A673 (cell line): ENCODE measurements at regions of chr6 and their contacts with region 1.

Region 1: GRCh38 chr6:85678602-85679444 is 36.1 kb upstream of the SYNCRIP start:
- DNase-seq: peak; percentile 99
- H3K4me3 ChIP-seq: peak overlapping the region; percentile 72
- H3K27ac ChIP-seq: peak overlapping the region; percentile 98
- H3K4me1 ChIP-seq: peaks cover 11% of the 10 kb centered on the region
- H3K27me3 ChIP-seq: no peaks in the 10 kb centered on the region
- CTCF ChIP-seq: no peak

Region 2: GRCh38 chr6:85460921-85461797 is 217.7 kb before region 1 on chr6:
- CTCF ChIA-PET with region 1: no interaction called
- POLR2A ChIA-PET with region 1: no interaction called
- intact Hi-C with region 1: loop called (anchors 10 kb)
- DNase-seq: no peak
- H3K4me3 ChIP-seq: no peak overlapping the region
- H3K27ac ChIP-seq: no peak overlapping the region
- H3K4me1 ChIP-seq: peaks cover 70% of the 10 kb centered on the region
- H3K27me3 ChIP-seq: no peaks in the 10 kb centered on the region
- CTCF ChIP-seq: no peak